PC-9 (cell line): ENCODE measurements at regions of chr10 and their contacts with region 1.

Region 1: GRCh38 chr10:116687633-116688032 is 54.7 kb downstream of the HSPA12A start:
- DNase-seq: no peak
- H3K4me3 ChIP-seq: no peak overlapping the region
- H3K27ac ChIP-seq: no peak overlapping the region
- H3K4me1 ChIP-seq: no peaks in the 10 kb centered on the region
- H3K27me3 ChIP-seq: no peaks in the 10 kb centered on the region
- CTCF ChIP-seq: no peak

Region 2: GRCh38 chr10:116787893-116788665 is 100.4 kb after region 1 on chr10:
- CTCF ChIA-PET with region 1: no interaction called
- POLR2A ChIA-PET with region 1: no interaction called
- intact Hi-C with region 1: loop called (anchors 1 kb)
- DNase-seq: peak in 1 of 2 experiments; percentile 59
- H3K4me3 ChIP-seq: no peak overlapping the region
- H3K27ac ChIP-seq: no peak overlapping the region
- H3K4me1 ChIP-seq: no peaks in the 10 kb centered on the region
- H3K27me3 ChIP-seq: no peaks in the 10 kb centered on the region
- CTCF ChIP-seq: peak; percentile 98